Lower lobe of right lung (tissue), 2 donors: ENCODE measurements at regions of chr5 and their contacts with region 1.

Region 1: GRCh38 chr5:151126199-151126645 is 31.4 kb downstream of the ANXA6 start:
- DNase-seq: peak; percentile 87
- ATAC-seq: peak; percentile 76 to 82
- H3K4me3 ChIP-seq: no peak overlapping the region
- H3K27ac ChIP-seq: no peak overlapping the region
- H3K4me1 ChIP-seq: peaks cover 13% of the 10 kb centered on the region
- H3K27me3 ChIP-seq: no peaks in the 10 kb centered on the region
- CTCF ChIP-seq: peak; percentile 83

Region 2: DNA sequence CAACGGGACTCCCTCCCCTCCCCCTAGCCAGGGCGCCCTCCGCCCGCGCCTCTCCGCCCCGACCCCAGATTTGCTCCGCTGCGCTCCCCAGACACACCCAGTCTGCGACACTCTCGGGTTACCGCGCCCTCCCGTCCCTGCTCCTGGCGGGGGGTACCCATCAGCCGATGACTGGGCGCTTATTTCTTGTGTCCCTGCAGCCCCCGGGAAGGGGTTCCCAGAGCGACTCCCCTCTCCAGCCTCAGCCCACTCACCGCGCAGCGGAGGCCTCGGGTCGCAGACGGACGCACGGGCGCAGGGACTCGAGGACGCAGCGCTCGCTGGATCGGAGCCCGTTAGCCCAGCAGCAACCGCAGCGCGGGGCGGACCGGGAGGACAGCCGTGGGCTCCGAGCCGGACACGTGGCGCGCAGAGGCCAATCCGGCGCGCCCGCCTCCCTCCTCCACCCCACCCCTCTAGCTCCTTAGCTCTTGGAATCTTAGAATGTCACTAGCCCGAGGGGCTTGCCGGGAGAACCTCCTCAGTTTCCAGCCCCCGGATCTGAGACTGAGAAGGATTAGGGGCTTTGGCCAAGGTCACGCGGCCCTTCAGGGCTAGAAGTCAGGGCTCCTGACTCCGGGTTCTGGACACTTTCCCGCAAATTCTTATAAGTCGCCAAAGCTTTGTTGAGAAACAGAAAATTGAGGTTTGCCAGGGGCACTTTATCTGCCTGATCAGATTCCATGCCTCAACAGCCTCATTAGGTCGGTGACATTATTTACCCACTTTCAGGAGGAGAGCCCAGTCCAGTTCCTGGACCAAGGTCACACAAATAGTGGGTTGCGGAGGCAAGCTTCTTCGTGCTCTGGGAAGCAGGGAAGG is 31.4 kb after region 1 on chr5 and contains the start of gene ANXA6:
- intact Hi-C with region 1: loop called (anchors 5 kb)
- DNase-seq: peak; percentile 92
- ATAC-seq: peak; percentile 99 to 100
- H3K4me3 ChIP-seq: peak within 1 kb of the TSS; percentile 63
- H3K27ac ChIP-seq: peak within 1 kb of the TSS; percentile 84
- H3K4me1 ChIP-seq: peaks cover 42% of the 10 kb centered on the region
- H3K27me3 ChIP-seq: no peaks in the 10 kb centered on the region
- CTCF ChIP-seq: no peak
- total RNA-seq, gene ANXA6: 120 TPM

Region 3: DNA sequence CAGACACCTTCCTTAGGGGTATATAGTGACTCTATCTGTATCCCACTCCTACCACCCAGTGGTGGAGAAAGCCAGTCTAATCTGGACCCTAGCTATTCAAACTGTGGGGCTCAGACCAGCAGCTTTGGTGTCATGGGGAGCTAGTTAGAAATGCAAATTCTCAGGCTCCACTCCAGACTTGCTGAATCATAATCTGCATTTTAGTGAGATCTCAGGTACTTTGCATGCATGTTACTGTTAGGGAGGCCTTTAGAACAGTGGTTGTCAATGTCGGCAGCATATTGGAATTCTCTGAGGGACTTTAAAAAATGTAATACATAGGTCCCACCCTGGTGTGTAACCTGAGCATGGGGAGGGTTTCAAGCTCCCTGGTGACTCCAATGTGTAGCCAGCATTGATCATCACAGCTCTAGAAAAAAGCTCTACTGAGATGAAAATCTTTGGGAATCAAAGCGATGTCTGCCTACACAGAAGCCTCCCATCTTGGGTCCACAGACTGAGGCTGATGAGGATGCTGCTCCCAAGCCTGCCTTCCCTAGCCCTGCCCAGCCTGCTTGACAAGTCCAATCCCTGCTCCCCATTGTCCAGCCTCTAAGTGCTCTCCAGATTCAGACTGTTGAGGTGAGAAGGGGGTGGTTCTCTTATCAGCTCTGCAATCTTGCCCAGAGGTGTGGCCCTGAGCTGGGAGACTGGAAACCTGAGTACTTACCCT is 114.9 kb after region 1 on chr5:
- intact Hi-C with region 1: loop called (anchors 10 kb)
- DNase-seq: peak; percentile 78
- ATAC-seq: peak; percentile 92 to 97
- H3K4me3 ChIP-seq: no peak overlapping the region
- H3K27ac ChIP-seq: no peak overlapping the region
- H3K4me1 ChIP-seq: peaks cover 6% of the 10 kb centered on the region
- H3K27me3 ChIP-seq: no peaks in the 10 kb centered on the region
- CTCF ChIP-seq: no peak

Region 4: GRCh38 chr5:151480384-151481293 is 354.4 kb after region 1 on chr5:
- intact Hi-C with region 1: no loop called
- DNase-seq: no peak
- ATAC-seq: no peak
- H3K4me3 ChIP-seq: no peak overlapping the region
- H3K27ac ChIP-seq: no peak overlapping the region
- H3K4me1 ChIP-seq: no peaks in the 10 kb centered on the region
- H3K27me3 ChIP-seq: no peaks in the 10 kb centered on the region
- CTCF ChIP-seq: no peak